Caco-2 (cell line): ENCODE measurements at regions of chr21 and their contacts with region 1.

Region 1: GRCh38 chr21:36989699-36990507 is 16.6 kb upstream of the RIPPLY3 start:
- DNase-seq: peak; percentile 92 to 95
- H3K4me3 ChIP-seq: peak overlapping the region; percentile 46
- H3K4me3 Mint-ChIP-seq: peak overlapping the region; percentile 96
- H3K27ac Mint-ChIP-seq: peak overlapping the region; percentile 96
- H3K4me1 ChIP-seq: peaks cover 15% of the 10 kb centered on the region
- H3K4me1 Mint-ChIP-seq: peaks cover 12% of the 10 kb centered on the region
- H3K27me3 ChIP-seq: no peaks in the 10 kb centered on the region
- H3K27me3 Mint-ChIP-seq: no peaks in the 10 kb centered on the region
- CTCF ChIP-seq: peak in 1 of 2 experiments; percentile 68

Region 2: DNA sequence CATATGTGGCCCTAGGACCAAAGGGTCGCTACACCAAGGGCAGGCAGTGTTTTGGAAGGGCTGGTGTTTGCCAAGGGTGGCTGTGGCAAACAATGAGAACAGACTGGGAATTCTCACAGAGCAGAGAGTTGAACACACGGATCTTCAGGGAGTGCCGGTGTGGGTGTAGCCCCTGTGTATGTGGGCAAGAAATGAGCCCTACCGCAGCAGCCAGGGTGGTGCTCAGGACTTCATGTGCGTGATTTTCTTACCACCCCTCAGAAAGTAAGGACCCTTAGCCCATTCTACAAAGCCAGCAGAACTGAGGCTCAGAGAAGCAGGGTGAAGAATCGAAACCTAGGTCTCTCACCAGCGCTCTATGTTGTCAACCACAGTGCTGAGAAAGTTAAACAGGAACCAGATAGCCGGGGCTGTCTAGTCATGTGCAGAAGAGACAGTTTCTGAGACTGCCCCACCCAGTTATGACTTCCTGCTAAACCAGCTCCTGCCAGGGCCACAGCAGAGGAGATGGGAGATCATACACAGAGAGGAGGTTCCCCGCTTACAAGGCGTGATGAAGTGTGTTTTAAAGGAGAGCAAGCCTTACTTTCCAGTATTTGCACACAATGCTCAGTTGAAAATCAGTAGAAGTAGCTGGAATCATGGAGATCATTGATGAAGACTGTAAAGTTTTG is 691.8 kb before region 1 on chr21:
- CTCF ChIA-PET with region 1: interaction called, 11 read pairs
- POLR2A ChIA-PET with region 1: no interaction called
- intact Hi-C with region 1: no loop called
- DNase-seq: peak; percentile 52 to 56
- H3K4me3 ChIP-seq: no peak overlapping the region
- H3K4me3 Mint-ChIP-seq: peak overlapping the region; percentile 48
- H3K27ac Mint-ChIP-seq: peak overlapping the region; percentile 97
- H3K4me1 ChIP-seq: peaks cover 15% of the 10 kb centered on the region
- H3K4me1 Mint-ChIP-seq: peaks cover 21% of the 10 kb centered on the region
- H3K27me3 ChIP-seq: no peaks in the 10 kb centered on the region
- H3K27me3 Mint-ChIP-seq: no peaks in the 10 kb centered on the region
- CTCF ChIP-seq: no peak

Region 3: DNA sequence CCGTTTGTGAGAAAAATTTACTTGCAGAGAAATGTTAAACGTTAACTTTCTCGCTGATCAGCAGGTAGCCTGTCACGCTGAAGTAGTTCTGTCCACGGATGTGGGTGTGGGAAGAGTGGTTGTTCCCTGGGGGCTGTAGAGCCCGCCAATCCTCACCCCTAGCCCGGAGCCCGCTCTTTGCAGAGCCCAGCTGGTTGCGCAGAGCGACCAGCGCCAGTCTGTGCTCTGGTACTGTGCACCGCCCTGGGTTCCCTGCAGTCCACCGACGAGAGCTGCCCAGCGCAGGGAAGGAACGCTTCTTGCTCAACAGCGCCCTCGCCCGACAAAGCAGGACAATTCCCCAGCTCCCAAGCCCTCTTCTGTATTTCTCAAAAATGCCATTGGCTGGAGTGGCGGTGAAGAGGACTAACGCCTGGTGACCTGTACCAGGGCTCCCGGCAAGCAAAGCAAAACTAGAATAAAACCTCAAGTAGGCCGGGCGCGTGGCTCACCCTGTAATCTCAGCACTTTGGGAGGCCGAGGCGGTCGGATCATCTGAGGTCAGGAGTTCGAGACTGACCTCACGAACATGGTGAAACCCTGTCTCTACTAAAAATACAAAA is 19.9 kb after region 1 on chr21:
- CTCF ChIA-PET with region 1: interaction called, 10 read pairs
- POLR2A ChIA-PET with region 1: no interaction called
- intact Hi-C with region 1: no loop called
- DNase-seq: peak; percentile 87 to 90
- H3K4me3 ChIP-seq: peak overlapping the region; percentile 43
- H3K4me3 Mint-ChIP-seq: peak overlapping the region; percentile 70
- H3K27ac Mint-ChIP-seq: no peak overlapping the region
- H3K4me1 ChIP-seq: no peaks in the 10 kb centered on the region
- H3K4me1 Mint-ChIP-seq: no peaks in the 10 kb centered on the region
- H3K27me3 ChIP-seq: no peaks in the 10 kb centered on the region
- H3K27me3 Mint-ChIP-seq: no peaks in the 10 kb centered on the region
- CTCF ChIP-seq: peak; percentile 85 to 87